CD4-positive, alpha-beta memory T cell (primary cell): ENCODE measurements at regions of chr14 and their contacts with region 1.

Region 1: DNA sequence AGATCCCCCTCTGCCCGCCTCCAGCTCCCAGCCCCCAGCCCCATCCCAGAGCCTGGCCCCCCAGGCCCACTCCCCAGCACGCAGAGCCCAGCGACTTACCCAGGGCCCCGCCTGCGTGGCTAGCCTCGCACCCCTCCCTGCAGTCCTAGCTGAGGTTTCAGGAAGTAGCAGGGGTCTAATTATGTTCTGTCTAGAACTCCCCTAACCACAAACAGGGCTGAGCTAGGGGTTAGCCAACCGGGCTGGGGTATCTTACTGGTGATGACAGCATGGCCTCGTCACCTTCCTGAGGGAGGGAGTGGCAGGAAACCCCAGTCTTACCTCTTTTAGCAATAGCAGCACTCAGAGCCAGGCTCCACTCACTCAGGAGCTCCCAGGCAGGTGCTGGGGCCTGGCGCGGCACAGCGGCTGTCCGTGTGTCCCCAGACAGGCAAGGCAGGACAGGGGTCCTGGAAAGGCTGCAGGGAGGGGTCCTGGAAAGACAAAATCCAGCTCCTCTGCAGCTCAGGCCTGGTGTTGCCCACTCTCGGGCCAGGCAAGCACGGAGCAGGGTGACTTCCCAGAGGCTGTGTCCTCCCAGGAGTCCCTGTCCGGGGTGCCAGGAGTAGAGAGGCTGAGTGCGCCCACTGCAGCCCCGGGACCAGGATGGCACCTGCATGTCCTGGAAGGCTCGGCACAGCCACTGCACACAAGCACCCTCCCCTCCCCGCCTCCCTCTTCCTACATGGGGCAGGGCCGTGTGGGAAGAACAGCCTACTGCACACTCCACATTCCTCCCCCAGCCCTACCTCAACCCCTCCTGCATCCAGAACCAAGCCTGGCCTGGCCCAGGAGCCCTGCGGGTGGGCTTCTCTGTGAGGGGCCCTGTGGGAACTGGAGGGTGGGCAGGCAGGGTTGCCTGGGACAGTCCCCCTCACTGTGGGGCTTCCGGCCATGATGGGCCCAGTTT is at the start of gene GPR132:
- DNase-seq: peak; percentile 93 to 99 (median 96)
- H3K4me3 ChIP-seq: peak within 1 kb of the TSS; percentile 89 to 97
- H3K4me3 Mint-ChIP-seq: peak within 1 kb of the TSS; percentile 89 to 97 (median 95)
- H3K27ac ChIP-seq: peak within 1 kb of the TSS; percentile 93
- H3K27ac Mint-ChIP-seq: peak within 1 kb of the TSS; percentile 92 to 100 (median 99)
- H3K4me1 ChIP-seq: peaks cover 91% of the 10 kb centered on the region
- H3K4me1 Mint-ChIP-seq: peaks cover 34 to 85% (median 62%) of the 10 kb centered on the region in 4 donors
- H3K27me3 ChIP-seq: no peaks in the 10 kb centered on the region
- H3K27me3 Mint-ChIP-seq: no peaks in the 10 kb centered on the region
- total RNA-seq, gene GPR132: 47.3 to 49.2 TPM

Region 2: GRCh38 chr14:104985675-104986525 is 79.7 kb before region 1 on chr14 and contains the start of gene CLBA1:
- CTCF ChIA-PET with region 1: interaction called, 4 read pairs
- POLR2A ChIA-PET with region 1: interaction called, 19 read pairs
- intact Hi-C with region 1: no loop called
- DNase-seq: peak; percentile 86 to 92 (median 90)
- H3K4me3 ChIP-seq: peak within 1 kb of the TSS in 1 of 2 donors; percentile 52
- H3K4me3 Mint-ChIP-seq: peak within 1 kb of the TSS; percentile 67 to 83 (median 79)
- H3K27ac ChIP-seq: peak within 1 kb of the TSS; percentile 61
- H3K27ac Mint-ChIP-seq: peak within 1 kb of the TSS; percentile 81 to 92 (median 88)
- H3K4me1 ChIP-seq: peaks cover 8% of the 10 kb centered on the region
- H3K4me1 Mint-ChIP-seq: peaks cover 0 to 10% (median 3%) of the 10 kb centered on the region in 4 donors
- H3K27me3 ChIP-seq: no peaks in the 10 kb centered on the region
- H3K27me3 Mint-ChIP-seq: peaks cover 2 to 3% of the 10 kb centered on the region in 2 donors
- total RNA-seq, gene CLBA1: 1.3 to 1.6 TPM

Region 3: GRCh38 chr14:105075379-105076295 is 10.1 kb after region 1 on chr14:
- CTCF ChIA-PET with region 1: interaction called, 5 read pairs
- POLR2A ChIA-PET with region 1: interaction called, 44 read pairs
- intact Hi-C with region 1: no loop called
- DNase-seq: no peak
- H3K4me3 ChIP-seq: no peak overlapping the region
- H3K4me3 Mint-ChIP-seq: peak overlapping the region in 2 of 8 donors; percentile 6 to 46
- H3K27ac ChIP-seq: no peak overlapping the region
- H3K27ac Mint-ChIP-seq: no peak overlapping the region
- H3K4me1 ChIP-seq: peaks cover 27% of the 10 kb centered on the region
- H3K4me1 Mint-ChIP-seq: peaks cover 16 to 48% (median 23%) of the 10 kb centered on the region in 4 donors
- H3K27me3 ChIP-seq: no peaks in the 10 kb centered on the region
- H3K27me3 Mint-ChIP-seq: no peaks in the 10 kb centered on the region